Activated CD4-positive, alpha-beta memory T cell treated with anti-CD3 and anti-CD28 coated beads for 36 hours (primary cell): ENCODE measurements at regions of chr2 and their contacts with region 1.

Region 1: GRCh38 chr2:47906157-47907038 is at the start of gene FBXO11:
- DNase-seq: peak; percentile 97
- H3K4me3 Mint-ChIP-seq: peak within 1 kb of the TSS; percentile 88
- H3K27ac Mint-ChIP-seq: peak within 1 kb of the TSS; percentile 91
- H3K4me1 Mint-ChIP-seq: peaks cover 40% of the 10 kb centered on the region
- H3K27me3 Mint-ChIP-seq: no peaks in the 10 kb centered on the region
- total RNA-seq, gene FBXO11: 38.2 to 41.1 TPM

Region 2: GRCh38 chr2:47782671-47783485 is 123.5 kb before region 1 on chr2 and contains the start of gene MSH6:
- CTCF ChIA-PET with region 1: interaction called, 6 read pairs
- POLR2A ChIA-PET with region 1: interaction called, 3 read pairs
- intact Hi-C with region 1: loop called (anchors 1 kb)
- DNase-seq: peak; percentile 91
- H3K4me3 Mint-ChIP-seq: peak within 1 kb of the TSS; percentile 89
- H3K27ac Mint-ChIP-seq: peak within 1 kb of the TSS; percentile 89
- H3K4me1 Mint-ChIP-seq: peaks cover 22% of the 10 kb centered on the region
- H3K27me3 Mint-ChIP-seq: no peaks in the 10 kb centered on the region
- total RNA-seq, gene MSH6: 131 to 140 TPM

Region 3: GRCh38 chr2:47869859-47870258 is 36.5 kb before region 1 on chr2:
- CTCF ChIA-PET with region 1: no interaction called
- POLR2A ChIA-PET with region 1: no interaction called
- intact Hi-C with region 1: loop called (anchors 2 kb)
- DNase-seq: no peak
- H3K4me3 Mint-ChIP-seq: no peak overlapping the region
- H3K27ac Mint-ChIP-seq: peak overlapping the region; percentile 19
- H3K4me1 Mint-ChIP-seq: peaks cover 79% of the 10 kb centered on the region
- H3K27me3 Mint-ChIP-seq: no peaks in the 10 kb centered on the region

Region 4: GRCh38 chr2:48107326-48107925 is 201.0 kb after region 1 on chr2:
- CTCF ChIA-PET with region 1: interaction called, 12 read pairs
- POLR2A ChIA-PET with region 1: no interaction called
- intact Hi-C with region 1: loop called (anchors 1 kb)
- DNase-seq: no peak
- H3K4me3 Mint-ChIP-seq: no peak overlapping the region
- H3K27ac Mint-ChIP-seq: no peak overlapping the region
- H3K4me1 Mint-ChIP-seq: peaks cover 26% of the 10 kb centered on the region
- H3K27me3 Mint-ChIP-seq: no peaks in the 10 kb centered on the region

Region 5: DNA sequence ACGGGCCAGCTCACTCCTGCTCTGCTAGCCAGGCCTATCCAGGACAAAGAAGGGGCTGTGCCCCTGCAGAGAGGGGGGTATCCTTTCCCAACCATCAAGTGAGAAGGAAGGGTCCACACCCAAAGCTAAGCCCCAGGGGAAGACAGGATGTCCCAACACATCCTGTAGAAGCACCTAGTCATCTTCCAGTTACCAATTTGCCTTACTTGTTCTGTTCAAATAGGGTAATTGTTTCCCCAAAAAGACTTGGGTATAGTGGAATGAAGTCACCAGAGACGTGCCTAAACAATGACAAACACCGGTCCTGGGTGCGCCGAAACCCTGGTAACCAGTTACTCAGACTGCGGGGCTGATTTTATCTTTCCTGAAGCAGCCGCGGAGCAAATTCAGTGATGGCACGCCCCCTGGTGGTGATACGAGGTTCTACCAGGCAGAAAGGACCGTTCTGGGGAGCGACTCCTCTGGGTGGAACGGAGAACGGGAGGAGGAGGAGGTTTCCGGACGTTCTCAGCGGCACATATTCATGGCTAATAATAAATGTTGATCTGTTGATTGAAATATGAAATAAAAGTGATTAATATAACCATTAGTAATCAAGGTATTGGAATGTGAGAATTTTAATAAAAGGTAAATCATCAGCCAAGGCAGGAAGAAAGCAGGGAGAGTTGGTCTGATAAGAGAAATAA is 514.3 kb after region 1 on chr2:
- CTCF ChIA-PET with region 1: interaction called, 3 read pairs
- POLR2A ChIA-PET with region 1: no interaction called
- intact Hi-C with region 1: loop called (anchors 1 kb)
- DNase-seq: peak; percentile 97
- H3K4me3 Mint-ChIP-seq: no peak overlapping the region
- H3K27ac Mint-ChIP-seq: peak overlapping the region; percentile 51
- H3K4me1 Mint-ChIP-seq: peaks cover 27% of the 10 kb centered on the region
- H3K27me3 Mint-ChIP-seq: peaks cover 6% of the 10 kb centered on the region